CD4-positive, alpha-beta memory T cell (primary cell): ENCODE measurements at regions of chr1 and their contacts with region 1.

Region 1: DNA sequence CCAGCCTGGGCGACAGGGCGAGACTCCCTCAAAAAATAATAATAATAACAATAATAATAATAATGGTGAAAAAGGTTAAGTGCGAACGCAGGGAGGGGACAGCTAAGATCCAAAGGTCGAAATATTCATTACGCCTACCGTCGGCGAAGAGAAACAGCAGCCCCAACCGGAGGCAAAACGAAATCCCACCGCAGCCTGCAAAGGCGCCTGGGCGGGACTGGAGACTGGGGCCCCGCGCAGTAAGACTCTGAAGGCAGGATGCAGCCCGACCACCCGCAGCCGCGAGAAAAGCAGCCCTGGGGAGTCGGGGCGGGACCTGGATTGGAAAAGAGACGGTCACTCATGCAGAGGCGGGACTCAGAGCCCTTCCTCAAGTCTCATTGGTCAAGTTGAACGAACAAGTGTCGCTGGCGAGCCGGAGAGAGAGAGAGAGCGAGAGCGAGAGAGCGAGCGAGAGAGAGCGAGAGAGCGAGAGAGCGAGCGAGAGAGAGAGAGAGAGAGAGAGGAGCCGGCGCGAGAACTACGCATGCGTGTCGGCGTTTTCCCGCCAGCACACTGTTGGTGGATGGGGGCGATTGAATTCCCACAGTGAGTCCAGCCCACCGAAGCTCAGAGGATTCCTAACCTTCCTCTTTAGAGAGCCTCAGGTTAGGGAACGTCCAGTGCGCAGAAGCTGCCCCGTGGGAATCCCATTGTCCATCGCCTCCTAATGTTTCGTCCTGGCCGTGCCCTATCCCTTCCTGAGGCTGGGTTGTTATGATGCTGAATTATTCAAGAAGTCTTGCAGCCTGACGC is 10.7 kb downstream of the ENTREP3 start:
- DNase-seq: peak; percentile 94 to 98 (median 96)
- H3K4me3 ChIP-seq: peak overlapping the region; percentile 11 to 73
- H3K4me3 Mint-ChIP-seq: peak overlapping the region; percentile 90 to 98 (median 93)
- H3K27ac ChIP-seq: peak overlapping the region; percentile 78
- H3K27ac Mint-ChIP-seq: peak overlapping the region; percentile 95 to 100 (median 99)
- H3K4me1 ChIP-seq: peaks cover 47% of the 10 kb centered on the region
- H3K4me1 Mint-ChIP-seq: peaks cover 14 to 58% (median 39%) of the 10 kb centered on the region in 4 donors
- H3K27me3 ChIP-seq: no peaks in the 10 kb centered on the region
- H3K27me3 Mint-ChIP-seq: peaks cover 3% of the 10 kb centered on the region in 2 donors

Region 2: DNA sequence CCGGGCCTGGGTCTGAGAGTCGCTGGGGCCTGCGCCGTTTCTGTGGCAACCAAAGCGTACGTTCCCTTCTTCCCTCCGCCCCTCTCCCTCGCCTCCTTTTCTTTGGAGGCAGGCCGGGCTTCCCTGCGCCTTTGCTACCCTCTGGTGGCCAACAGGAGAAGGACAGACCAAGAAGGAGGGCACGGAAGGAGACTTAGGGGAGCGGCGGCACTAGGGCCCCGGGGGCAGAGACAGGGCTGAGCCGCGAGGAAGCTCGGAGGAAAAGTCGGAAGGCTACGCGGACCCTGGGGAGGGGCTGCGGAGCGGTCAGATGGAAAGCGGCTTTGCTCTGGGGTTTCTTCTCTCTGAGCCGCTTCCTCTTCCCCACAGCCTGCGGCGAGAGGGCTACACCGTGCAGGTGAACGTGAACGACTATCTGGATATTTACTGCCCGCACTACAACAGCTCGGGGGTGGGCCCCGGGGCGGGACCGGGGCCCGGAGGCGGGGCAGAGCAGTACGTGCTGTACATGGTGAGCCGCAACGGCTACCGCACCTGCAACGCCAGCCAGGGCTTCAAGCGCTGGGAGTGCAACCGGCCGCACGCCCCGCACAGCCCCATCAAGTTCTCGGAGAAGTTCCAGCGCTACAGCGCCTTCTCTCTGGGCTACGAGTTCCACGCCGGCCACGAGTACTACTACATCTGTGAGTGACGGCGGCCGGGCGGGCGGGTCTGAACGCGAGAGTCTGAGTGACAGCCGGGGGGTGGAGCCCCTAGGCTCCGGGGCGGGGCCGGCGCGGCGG is 159.7 kb before region 1 on chr1:
- CTCF ChIA-PET with region 1: no interaction called
- POLR2A ChIA-PET with region 1: no interaction called
- intact Hi-C with region 1: no loop called
- DNase-seq: peak; percentile 92 to 96 (median 92)
- H3K4me3 ChIP-seq: peak overlapping the region; percentile 80 to 95
- H3K4me3 Mint-ChIP-seq: peak overlapping the region; percentile 91 to 98 (median 94)
- H3K27ac ChIP-seq: peak overlapping the region; percentile 54
- H3K27ac Mint-ChIP-seq: peak overlapping the region; percentile 88 to 98 (median 94)
- H3K4me1 ChIP-seq: peaks cover 57% of the 10 kb centered on the region
- H3K4me1 Mint-ChIP-seq: peaks cover 22 to 44% (median 34%) of the 10 kb centered on the region in 4 donors
- H3K27me3 ChIP-seq: peaks cover 34% of the 10 kb centered on the region
- H3K27me3 Mint-ChIP-seq: peaks cover 13 to 30% of the 10 kb centered on the region in 2 donors

Region 3: DNA sequence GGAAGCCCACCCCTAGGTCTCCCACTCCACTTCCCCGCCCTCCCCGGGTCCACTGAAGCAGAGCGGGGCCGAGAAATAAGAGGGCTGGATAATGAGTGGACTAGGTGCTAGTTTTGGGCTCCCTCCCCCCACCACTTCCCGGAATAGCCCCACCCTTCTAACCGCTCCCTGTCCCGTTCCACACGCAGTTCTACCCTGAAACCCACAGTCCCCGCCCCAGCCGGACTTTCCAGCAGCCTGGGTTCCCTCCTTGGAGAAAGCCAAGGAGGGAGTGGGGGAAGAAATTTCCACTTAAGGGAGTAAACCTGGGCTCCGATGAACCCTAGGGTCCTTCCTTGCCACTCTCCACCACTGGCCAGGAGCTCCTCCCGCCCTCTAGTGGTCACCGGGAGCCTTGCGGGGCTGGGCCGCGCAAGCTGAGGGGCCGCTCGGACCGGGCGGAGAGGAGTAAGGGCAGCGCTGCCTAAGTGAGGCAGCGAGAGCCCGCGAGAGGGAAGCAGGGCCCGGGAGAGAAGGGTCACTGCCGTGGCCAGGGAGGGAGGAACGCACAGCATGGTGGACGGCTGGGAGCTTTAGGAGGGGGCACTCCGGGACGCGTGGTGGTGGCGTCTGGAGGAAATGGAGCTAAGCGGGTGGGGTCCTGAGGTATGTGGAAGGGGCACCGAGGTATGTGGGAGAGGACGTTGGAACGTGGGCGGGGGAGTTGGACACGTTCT is 51.1 kb before region 1 on chr1:
- CTCF ChIA-PET with region 1: interaction called, 4 read pairs
- POLR2A ChIA-PET with region 1: interaction called, 16 read pairs
- intact Hi-C with region 1: loop called (anchors 5 kb)
- DNase-seq: peak; percentile 60 to 72 (median 62)
- H3K4me3 ChIP-seq: peak overlapping the region; percentile 58 to 73
- H3K4me3 Mint-ChIP-seq: peak overlapping the region; percentile 87 to 97 (median 92)
- H3K27ac ChIP-seq: peak overlapping the region; percentile 67
- H3K27ac Mint-ChIP-seq: peak overlapping the region; percentile 91 to 99 (median 98)
- H3K4me1 ChIP-seq: peaks cover 27% of the 10 kb centered on the region
- H3K4me1 Mint-ChIP-seq: peaks cover 19 to 38% (median 24%) of the 10 kb centered on the region in 4 donors
- H3K27me3 ChIP-seq: no peaks in the 10 kb centered on the region
- H3K27me3 Mint-ChIP-seq: no peaks in the 10 kb centered on the region

Region 4: DNA sequence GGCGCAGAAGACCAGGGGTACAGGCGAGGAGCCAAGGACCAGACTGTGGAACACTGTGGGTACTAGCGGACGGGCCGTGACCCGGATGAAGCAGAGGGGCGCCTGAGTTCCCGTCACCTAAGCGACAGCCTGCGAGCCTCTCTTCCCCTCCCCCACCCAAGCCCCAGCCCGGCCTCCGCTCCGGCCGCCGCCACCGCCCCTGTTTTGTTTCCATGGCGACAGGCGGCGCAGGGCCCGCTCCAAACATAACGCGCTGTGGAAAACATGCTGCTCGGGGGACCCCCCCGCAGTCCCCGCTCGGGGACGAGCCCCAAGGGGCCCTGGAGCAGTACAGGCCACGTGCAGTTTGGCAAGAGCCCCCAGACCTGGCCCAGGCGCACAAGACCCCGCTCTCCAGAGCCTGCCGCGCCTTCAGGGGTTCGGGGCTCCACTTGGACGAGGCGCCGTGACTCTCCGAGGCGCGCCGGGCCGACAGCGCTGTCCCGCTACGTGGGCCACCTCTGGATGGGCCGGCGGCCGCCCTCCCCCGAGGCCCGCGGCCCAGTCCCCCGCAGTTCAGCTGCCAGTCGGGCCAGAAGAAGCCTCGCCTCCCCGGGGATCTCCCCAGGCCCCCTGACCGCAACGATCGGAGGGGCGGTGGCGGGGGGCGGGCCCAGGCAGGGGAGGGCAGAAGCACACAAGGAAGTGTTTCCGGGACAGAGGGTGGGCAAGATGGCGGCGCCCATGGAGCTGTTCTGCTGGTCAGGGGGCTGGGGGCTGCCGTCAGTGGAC is 35.8 kb before region 1 on chr1 and contains the start of gene MTX1:
- CTCF ChIA-PET with region 1: interaction called, 23 read pairs
- POLR2A ChIA-PET with region 1: interaction called, 28 read pairs
- intact Hi-C with region 1: loop called (anchors 5 kb)
- DNase-seq: peak; percentile 90 to 96 (median 91)
- H3K4me3 ChIP-seq: peak within 1 kb of the TSS; percentile 68 to 100
- H3K4me3 Mint-ChIP-seq: peak within 1 kb of the TSS; percentile 86 to 92 (median 89)
- H3K27ac ChIP-seq: peak within 1 kb of the TSS; percentile 100
- H3K27ac Mint-ChIP-seq: peak within 1 kb of the TSS; percentile 95 to 98 (median 98)
- H3K4me1 ChIP-seq: peaks cover 29% of the 10 kb centered on the region
- H3K4me1 Mint-ChIP-seq: peaks cover 17 to 29% (median 24%) of the 10 kb centered on the region in 4 donors
- H3K27me3 ChIP-seq: no peaks in the 10 kb centered on the region
- H3K27me3 Mint-ChIP-seq: no peaks in the 10 kb centered on the region
- total RNA-seq, gene MTX1: 17.7 to 18.2 TPM

Region 5: GRCh38 chr1:155227261-155228095 is 17.1 kb before region 1 on chr1:
- CTCF ChIA-PET with region 1: interaction called, 5 read pairs
- POLR2A ChIA-PET with region 1: interaction called, 47 read pairs
- intact Hi-C with region 1: loop called (anchors 1 kb)
- DNase-seq: peak; percentile 94 to 99 (median 98)
- H3K4me3 ChIP-seq: peak overlapping the region; percentile 80 to 86
- H3K4me3 Mint-ChIP-seq: peak overlapping the region; percentile 78 to 93 (median 88)
- H3K27ac ChIP-seq: peak overlapping the region; percentile 69
- H3K27ac Mint-ChIP-seq: peak overlapping the region; percentile 77 to 97 (median 93)
- H3K4me1 ChIP-seq: peaks cover 19% of the 10 kb centered on the region
- H3K4me1 Mint-ChIP-seq: peaks cover 14 to 34% (median 25%) of the 10 kb centered on the region in 4 donors
- H3K27me3 ChIP-seq: no peaks in the 10 kb centered on the region
- H3K27me3 Mint-ChIP-seq: no peaks in the 10 kb centered on the region

Region 6: DNA sequence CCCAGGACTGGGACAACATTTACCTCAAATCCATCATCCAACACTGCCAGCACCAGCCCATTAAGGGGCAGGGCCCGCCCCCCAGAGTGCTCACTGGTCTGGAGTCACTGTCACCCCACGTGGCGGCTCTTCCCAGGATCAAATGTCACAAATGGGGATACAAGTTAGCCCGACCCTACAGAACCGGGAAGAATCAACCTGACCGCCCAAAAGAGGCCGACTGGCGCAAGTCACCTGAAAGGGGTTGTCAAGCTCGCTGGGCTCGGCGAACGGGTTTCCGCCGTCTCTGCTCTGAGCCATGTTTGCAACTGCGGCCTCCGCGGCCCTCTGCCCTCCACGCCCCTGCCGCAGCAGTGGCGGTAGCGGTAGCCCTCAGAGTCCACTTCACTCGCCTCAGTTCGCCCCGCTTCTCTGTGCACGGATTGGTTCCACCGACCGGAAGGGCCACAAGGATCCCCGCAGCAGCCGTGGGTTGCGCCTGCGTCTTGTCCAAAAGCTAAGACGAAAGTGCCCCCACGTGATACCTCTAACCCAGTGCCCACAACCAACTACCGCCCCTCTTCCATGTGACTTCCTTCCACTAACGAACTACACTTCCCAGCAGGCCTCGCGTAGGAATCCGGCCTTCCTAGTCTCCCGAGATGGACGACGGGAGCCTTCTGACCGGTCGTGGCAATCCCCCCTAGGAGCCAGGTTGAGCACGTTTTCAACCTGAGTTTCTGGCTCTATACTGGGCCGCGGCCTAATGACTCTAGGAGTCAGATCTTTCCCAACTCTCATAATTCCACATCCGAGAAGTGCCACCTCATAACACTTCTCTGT is 17.5 kb after region 1 on chr1 and contains the start of gene SCAMP3:
- CTCF ChIA-PET with region 1: interaction called, 77 read pairs
- POLR2A ChIA-PET with region 1: interaction called, 59 read pairs
- intact Hi-C with region 1: no loop called
- DNase-seq: peak; percentile 82 to 94 (median 84)
- H3K4me3 ChIP-seq: peak within 1 kb of the TSS; percentile 94
- H3K4me3 Mint-ChIP-seq: peak within 1 kb of the TSS; percentile 95 to 100 (median 99)
- H3K27ac ChIP-seq: peak within 1 kb of the TSS; percentile 86
- H3K27ac Mint-ChIP-seq: peak within 1 kb of the TSS; percentile 86 to 99 (median 97)
- H3K4me1 ChIP-seq: peaks cover 23% of the 10 kb centered on the region
- H3K4me1 Mint-ChIP-seq: peaks cover 12 to 40% (median 30%) of the 10 kb centered on the region in 4 donors
- H3K27me3 ChIP-seq: no peaks in the 10 kb centered on the region
- H3K27me3 Mint-ChIP-seq: no peaks in the 10 kb centered on the region
- total RNA-seq, gene SCAMP3: 94.4 to 101 TPM

Region 7: DNA sequence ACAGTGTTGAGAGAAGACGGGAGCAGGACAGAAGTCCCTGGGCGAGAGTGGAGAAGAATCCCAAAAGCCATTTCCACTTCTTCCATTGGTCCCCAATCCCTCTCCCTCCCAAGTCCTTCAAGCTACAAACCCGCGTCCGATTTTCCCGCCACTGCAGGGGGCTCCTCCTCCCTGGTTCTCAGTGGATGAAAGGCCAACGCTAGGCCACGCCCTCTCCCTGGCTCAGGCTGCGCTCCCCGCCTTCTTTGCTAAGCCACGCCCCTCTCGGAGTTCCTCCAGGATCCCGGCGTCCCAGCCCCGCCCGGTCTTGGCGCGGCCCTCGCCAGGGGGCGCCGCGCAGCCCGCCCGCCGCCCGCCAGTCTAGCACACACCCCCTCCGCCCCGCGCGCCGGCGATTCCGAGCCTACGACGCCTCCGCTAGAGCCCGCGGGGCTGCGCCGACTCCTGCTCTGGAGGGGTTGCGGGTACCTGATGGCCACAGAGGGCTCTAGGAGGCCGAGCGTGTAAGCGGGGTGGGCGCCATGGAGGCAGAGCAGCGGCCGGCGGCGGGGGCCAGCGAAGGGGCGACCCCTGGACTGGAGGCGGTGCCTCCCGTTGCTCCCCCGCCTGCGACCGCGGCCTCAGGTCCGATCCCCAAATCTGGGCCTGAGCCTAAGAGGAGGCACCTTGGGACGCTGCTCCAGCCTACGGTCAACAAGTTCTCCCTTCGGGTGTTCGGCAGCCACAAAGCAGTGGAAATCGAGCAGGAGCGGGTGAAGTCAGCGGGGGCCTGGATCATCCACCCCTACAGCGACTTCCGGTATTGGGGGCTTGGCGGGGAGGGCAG is 32.7 kb after region 1 on chr1 and contains the start of gene HCN3:
- CTCF ChIA-PET with region 1: interaction called, 44 read pairs
- POLR2A ChIA-PET with region 1: interaction called, 9 read pairs
- intact Hi-C with region 1: loop called (anchors 5 kb)
- DNase-seq: peak; percentile 80 to 90 (median 81)
- H3K4me3 ChIP-seq: peak within 1 kb of the TSS; percentile 62 to 81
- H3K4me3 Mint-ChIP-seq: peak within 1 kb of the TSS; percentile 78 to 86 (median 83)
- H3K27ac ChIP-seq: peak within 1 kb of the TSS; percentile 55
- H3K27ac Mint-ChIP-seq: peak within 1 kb of the TSS; percentile 42 to 91 (median 81)
- H3K4me1 ChIP-seq: peaks cover 35% of the 10 kb centered on the region
- H3K4me1 Mint-ChIP-seq: peaks cover 23 to 41% (median 32%) of the 10 kb centered on the region in 4 donors
- H3K27me3 ChIP-seq: no peaks in the 10 kb centered on the region
- H3K27me3 Mint-ChIP-seq: no peaks in the 10 kb centered on the region
- total RNA-seq, gene HCN3: 4.9 to 5.3 TPM

Region 8: DNA sequence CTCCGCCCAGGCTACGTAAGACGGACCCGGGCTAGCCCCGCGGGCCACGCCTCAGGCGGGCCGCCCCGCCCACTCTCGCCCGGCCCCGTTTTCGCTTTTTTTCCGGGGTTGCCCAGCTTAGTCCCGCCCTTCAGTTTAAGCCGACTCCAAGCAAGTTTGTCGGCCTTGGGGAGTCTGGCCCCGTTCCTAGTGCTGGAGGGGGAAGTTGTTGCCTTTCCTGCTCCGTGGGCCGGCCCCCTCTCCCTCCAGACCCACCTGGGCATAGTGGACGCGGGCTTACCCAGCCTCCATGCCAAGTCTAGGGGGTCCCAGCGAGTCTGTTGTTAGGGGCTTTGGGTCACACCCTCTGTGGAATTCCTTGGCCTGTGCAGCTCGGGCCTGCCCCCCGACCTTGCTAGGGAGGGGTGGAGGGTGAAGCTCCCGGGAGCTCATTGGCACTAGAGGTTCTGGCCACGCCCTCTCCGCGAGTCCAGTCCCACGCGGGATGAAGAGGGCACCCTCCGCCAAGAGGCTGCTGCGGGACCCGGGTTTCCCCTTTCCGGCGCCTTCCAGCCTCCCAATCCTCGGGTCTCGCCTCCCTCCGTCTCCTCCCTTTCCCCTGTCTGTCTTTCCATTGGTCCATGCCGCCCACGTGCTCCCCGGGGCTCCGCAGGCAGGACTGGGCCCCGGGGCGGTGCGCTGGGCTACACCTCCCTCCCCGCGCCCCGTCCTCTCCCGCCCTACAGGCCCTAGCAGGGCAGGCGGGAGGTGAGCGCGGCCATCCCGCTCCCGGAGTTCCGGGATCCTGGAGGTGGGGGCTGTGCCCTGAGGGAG is 79.4 kb after region 1 on chr1:
- CTCF ChIA-PET with region 1: interaction called, 143 read pairs
- POLR2A ChIA-PET with region 1: interaction called, 28 read pairs
- intact Hi-C with region 1: no loop called
- DNase-seq: peak; percentile 83 to 93 (median 85)
- H3K4me3 ChIP-seq: peak overlapping the region; percentile 91 to 96
- H3K4me3 Mint-ChIP-seq: peak overlapping the region; percentile 70 to 91 (median 88)
- H3K27ac ChIP-seq: peak overlapping the region; percentile 96
- H3K27ac Mint-ChIP-seq: peak overlapping the region; percentile 82 to 93 (median 90)
- H3K4me1 ChIP-seq: peaks cover 31% of the 10 kb centered on the region
- H3K4me1 Mint-ChIP-seq: peaks cover 14 to 46% (median 29%) of the 10 kb centered on the region in 4 donors
- H3K27me3 ChIP-seq: no peaks in the 10 kb centered on the region
- H3K27me3 Mint-ChIP-seq: no peaks in the 10 kb centered on the region